ENCODE measurements at regions of chr2 and their contacts with region 1.

Region 1: GRCh38 chr2:98702127-98702802 is 28.7 kb downstream of the MGAT4A start:
- DNase-seq: peak; percentile 91
- ATAC-seq: peak; percentile 99
- H3K4me3 ChIP-seq: peak overlapping the region; percentile 21 to 55 (median 29)
- H3K27ac ChIP-seq: peak overlapping the region; percentile 88
- H3K4me1 ChIP-seq: peaks cover 63% of the 10 kb centered on the region
- H3K27me3 ChIP-seq: no peaks in the 10 kb centered on the region
- CTCF ChIP-seq: peak; percentile 41
- EP300 ChIP-seq: peak in 1 of 2 experiments; percentile 73; a peak in 2 of 4 replicates
- POLR2A ChIP-seq: peak; percentile 74 to 82
- RAD21 ChIP-seq: peak; percentile 28; the same call in 1 of the 2 replicates

Region 2: GRCh38 chr2:98649135-98649991 is 52.9 kb before region 1 on chr2:
- CTCF ChIA-PET with region 1: no interaction called
- POLR2A ChIA-PET with region 1: interaction called, 4 read pairs
- in situ Hi-C with region 1: no loop called
- intact Hi-C with region 1: loop called (anchors 10 kb)
- DNase-seq: peak; percentile 83
- ATAC-seq: peak; percentile 99
- H3K4me3 ChIP-seq: no peak overlapping the region
- H3K27ac ChIP-seq: no peak overlapping the region
- H3K4me1 ChIP-seq: peaks cover 10% of the 10 kb centered on the region; the same call in 1 of the 2 replicates
- H3K27me3 ChIP-seq: no peaks in the 10 kb centered on the region
- CTCF ChIP-seq: peak; percentile 96
- EP300 ChIP-seq: no peak
- POLR2A ChIP-seq: no peak
- RAD21 ChIP-seq: peak; percentile 98

Region 3: GRCh38 chr2:98795891-98796676 is 93.8 kb after region 1 on chr2:
- CTCF ChIA-PET with region 1: no interaction called
- POLR2A ChIA-PET with region 1: interaction called, 22 read pairs
- in situ Hi-C with region 1: no loop called
- intact Hi-C with region 1: loop called (anchors 1 kb)
- DNase-seq: peak; percentile 100
- ATAC-seq: peak; percentile 89
- H3K4me3 ChIP-seq: peak overlapping the region; percentile 4 to 53 (median 28); a peak in 4 of 6 replicates
- H3K27ac ChIP-seq: peak overlapping the region; percentile 94
- H3K4me1 ChIP-seq: peaks cover 80% of the 10 kb centered on the region
- H3K27me3 ChIP-seq: no peaks in the 10 kb centered on the region
- CTCF ChIP-seq: peak; percentile 69
- EP300 ChIP-seq: peak; percentile 96 to 99
- POLR2A ChIP-seq: peak; percentile 72 to 79
- RAD21 ChIP-seq: peak; percentile 76